Activated naive CD4-positive, alpha-beta T cell treated with anti-CD3 and anti-CD28 coated beads for 36 hours (primary cell): ENCODE measurements at regions of chr2 and their contacts with region 1.

Region 1: DNA sequence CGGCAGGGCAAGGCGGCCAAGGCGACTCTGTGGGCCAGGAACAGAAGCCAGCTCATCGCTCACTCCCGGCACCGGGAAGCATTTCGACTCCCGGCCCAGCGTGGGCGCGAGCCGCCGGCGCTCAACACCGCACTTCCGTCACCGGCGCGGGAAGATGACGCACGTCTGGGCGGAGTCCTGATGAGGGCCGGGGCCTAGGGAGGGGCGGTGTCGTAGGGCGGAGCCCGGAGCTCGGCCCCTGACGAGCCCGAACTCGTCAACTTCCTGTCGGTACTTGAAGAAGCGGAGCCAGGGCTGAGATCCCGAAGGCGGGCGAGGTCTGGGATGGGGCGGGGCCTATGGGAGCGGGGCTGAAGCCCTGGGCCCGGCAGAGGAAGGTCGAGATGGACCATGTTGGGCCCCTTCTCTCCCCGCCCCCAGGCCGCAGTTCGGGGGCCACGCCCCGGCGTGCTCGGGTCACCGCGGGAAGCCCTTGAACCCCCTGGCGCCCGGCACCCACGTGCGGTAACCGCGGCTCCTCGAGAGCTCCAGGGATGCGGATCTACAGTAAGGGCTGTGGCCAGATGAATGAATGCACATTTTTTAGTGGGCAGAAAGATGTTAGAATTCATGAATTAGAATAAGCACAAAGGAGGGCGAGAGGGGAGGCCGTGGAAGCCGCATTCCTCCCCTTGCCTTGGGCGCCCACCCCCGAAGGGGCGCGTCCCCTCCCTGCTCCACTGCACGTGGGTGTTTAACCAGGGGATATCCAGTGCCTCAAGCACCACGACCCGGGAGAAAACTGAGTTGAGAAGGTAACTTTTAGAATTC is at the start of gene RNASEH1:
- DNase-seq: peak; percentile 99
- H3K4me3 Mint-ChIP-seq: peak within 1 kb of the TSS; percentile 84
- H3K27ac Mint-ChIP-seq: peak within 1 kb of the TSS; percentile 90
- H3K4me1 Mint-ChIP-seq: peaks cover 36% of the 10 kb centered on the region
- H3K27me3 Mint-ChIP-seq: no peaks in the 10 kb centered on the region
- total RNA-seq, gene RNASEH1: 23.0 to 24.0 TPM

Region 2: DNA sequence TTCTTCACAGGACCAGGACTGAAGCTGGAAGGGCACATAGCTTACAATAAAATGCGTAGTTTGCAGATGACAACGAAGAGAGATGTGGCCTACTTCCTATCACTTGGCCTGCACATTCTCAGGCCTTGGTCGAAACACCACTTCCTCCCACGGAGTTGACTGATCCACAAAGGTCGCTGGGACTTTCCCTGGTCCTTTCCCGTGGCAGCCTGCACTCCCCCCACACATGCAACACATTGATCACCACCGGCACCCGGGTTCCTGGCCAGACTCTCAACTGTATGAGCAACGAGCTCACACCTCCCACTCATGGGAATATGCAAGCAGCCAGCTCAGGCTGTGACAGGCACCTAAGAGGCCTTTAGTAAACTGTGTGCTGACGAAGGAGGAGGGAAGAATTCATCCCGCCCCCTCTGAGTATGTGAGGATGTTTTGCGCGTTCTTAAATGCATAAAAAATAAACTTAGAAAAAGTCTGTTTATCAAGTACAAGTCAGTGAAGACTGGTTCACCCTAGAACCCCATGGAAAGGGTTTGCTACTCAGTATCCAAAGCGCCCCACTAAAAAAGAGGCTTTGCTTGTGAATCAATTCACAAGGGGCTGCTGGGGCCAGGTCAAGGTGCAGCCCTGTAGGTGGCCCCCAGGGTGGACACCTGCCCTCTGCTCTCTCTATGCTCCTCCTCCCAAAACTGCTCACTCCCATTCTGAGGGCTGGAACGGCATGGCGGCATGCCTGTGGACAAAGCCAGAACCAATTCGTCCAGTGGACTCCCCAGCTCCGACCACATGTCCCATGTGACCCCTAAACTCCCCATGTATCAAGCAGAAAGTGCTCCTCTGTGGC is 335.1 kb before region 1 on chr2:
- CTCF ChIA-PET with region 1: no interaction called
- intact Hi-C with region 1: loop called (anchors 1 kb)
- DNase-seq: peak; percentile 97
- H3K4me3 Mint-ChIP-seq: peak overlapping the region; percentile 35
- H3K27ac Mint-ChIP-seq: peak overlapping the region; percentile 100
- H3K4me1 Mint-ChIP-seq: peaks cover 44% of the 10 kb centered on the region
- H3K27me3 Mint-ChIP-seq: no peaks in the 10 kb centered on the region

Region 3: DNA sequence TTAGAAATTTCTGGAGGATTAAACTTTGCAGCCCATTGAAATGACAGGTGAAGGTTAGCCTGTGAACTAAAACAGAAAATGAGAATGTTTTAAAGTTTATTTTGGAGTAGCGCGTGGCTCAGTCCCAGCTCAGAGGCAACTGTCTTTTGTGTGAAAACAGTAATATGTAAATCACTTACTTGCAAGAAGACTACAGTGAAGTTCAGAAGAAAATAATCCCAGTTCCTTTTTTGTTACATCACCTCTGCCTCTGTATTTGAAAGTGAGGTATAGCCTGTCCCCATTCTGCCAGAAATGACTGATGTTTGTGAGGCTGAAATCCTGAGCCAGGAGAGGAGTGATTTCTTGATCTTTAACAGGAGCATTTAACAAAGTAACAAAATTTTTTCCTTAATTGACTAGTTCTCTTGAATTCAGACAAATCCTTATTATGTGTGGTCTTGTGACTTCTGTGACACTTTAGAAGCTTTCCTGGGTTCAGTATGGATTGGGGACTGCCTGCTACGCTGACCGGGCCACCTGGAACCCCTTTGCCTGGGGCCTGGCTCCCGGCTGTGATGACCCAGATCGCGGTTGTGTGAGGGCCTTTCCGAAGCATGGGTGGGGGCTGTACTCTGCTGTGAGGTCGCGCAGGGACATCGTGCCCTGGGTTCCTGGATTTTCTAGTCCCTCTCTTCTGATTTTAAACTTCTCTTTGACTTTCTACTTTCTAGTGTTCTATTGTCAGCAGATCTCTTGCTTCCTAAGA is 154.6 kb before region 1 on chr2:
- CTCF ChIA-PET with region 1: no interaction called
- intact Hi-C with region 1: no loop called
- DNase-seq: no peak
- H3K4me3 Mint-ChIP-seq: no peak overlapping the region
- H3K27ac Mint-ChIP-seq: no peak overlapping the region
- H3K4me1 Mint-ChIP-seq: peaks cover 13% of the 10 kb centered on the region
- H3K27me3 Mint-ChIP-seq: no peaks in the 10 kb centered on the region

Region 4: DNA sequence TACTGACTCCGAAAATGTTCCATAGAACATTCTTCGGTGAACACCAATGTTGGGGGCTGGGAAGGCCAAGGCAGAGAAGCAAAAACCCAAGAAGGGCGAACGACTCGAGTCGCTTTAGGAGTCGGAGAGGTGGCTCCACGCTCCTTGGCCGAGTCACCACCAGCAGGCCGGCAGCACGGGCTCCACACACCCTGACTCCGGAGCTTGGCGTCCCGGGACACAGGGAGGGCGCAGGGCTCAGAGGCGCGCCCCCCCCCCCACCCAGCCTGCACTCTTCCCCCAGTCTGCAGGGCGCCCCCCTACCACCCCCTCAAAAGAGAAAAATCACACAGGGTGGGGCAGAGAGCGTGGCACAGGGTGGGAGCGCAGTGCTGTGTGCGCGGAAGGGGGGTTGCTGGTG is 31.5 kb before region 1 on chr2:
- CTCF ChIA-PET with region 1: no interaction called
- intact Hi-C with region 1: no loop called
- DNase-seq: no peak
- H3K4me3 Mint-ChIP-seq: no peak overlapping the region
- H3K27ac Mint-ChIP-seq: no peak overlapping the region
- H3K4me1 Mint-ChIP-seq: peaks cover under 1% of the 10 kb centered on the region
- H3K27me3 Mint-ChIP-seq: no peaks in the 10 kb centered on the region

Region 5: GRCh38 chr2:3536682-3537632 is 21.5 kb before region 1 on chr2:
- CTCF ChIA-PET with region 1: no interaction called
- intact Hi-C with region 1: loop called (anchors 2 kb)
- DNase-seq: no peak
- H3K4me3 Mint-ChIP-seq: peak overlapping the region; percentile 61
- H3K27ac Mint-ChIP-seq: peak overlapping the region; percentile 83
- H3K4me1 Mint-ChIP-seq: peaks cover 3% of the 10 kb centered on the region
- H3K27me3 Mint-ChIP-seq: no peaks in the 10 kb centered on the region

Region 6: GRCh38 chr2:3595985-3596384 is 37.6 kb after region 1 on chr2:
- CTCF ChIA-PET with region 1: no interaction called
- intact Hi-C with region 1: loop called (anchors 2 kb)
- DNase-seq: peak; percentile 83
- H3K4me3 Mint-ChIP-seq: no peak overlapping the region
- H3K27ac Mint-ChIP-seq: peak overlapping the region; percentile 24
- H3K4me1 Mint-ChIP-seq: peaks cover 29% of the 10 kb centered on the region
- H3K27me3 Mint-ChIP-seq: peaks cover 9% of the 10 kb centered on the region

Region 7: DNA sequence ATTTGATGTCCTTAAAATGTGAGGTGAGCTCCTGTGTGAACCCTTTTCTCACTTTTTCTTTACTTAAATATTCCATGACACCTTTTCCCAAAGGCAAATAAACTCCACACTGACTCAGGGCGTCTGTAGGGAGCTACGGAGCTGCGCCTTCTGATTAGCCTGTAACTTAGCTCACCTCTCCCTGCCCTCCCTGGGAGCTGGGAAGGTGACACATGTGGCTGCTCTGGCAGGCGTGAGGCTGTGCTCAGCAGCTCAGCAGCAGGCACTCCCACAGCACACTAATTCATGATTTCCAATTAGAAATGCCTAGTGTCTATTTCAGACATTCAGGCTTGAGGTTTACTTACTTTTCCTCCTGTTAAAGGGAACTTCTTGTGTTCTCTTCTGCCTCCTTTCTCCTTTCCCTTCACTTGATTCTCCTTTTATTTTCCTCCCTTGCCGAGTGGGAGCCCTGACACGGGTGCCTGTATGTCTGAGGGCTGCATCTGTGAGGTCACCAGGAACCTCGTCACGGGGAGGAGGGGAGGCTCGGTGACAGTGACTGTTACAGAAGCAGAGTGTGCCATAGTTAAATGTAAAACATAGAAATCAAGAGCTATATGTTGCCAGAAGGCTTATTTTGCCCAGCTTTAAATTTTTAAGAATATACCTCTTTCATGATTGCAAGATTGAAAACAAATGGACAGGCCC is 582.0 kb after region 1 on chr2:
- CTCF ChIA-PET with region 1: no interaction called
- intact Hi-C with region 1: no loop called
- DNase-seq: no peak
- H3K4me3 Mint-ChIP-seq: no peak overlapping the region
- H3K27ac Mint-ChIP-seq: no peak overlapping the region
- H3K4me1 Mint-ChIP-seq: no peaks in the 10 kb centered on the region
- H3K27me3 Mint-ChIP-seq: no peaks in the 10 kb centered on the region

Region 8: DNA sequence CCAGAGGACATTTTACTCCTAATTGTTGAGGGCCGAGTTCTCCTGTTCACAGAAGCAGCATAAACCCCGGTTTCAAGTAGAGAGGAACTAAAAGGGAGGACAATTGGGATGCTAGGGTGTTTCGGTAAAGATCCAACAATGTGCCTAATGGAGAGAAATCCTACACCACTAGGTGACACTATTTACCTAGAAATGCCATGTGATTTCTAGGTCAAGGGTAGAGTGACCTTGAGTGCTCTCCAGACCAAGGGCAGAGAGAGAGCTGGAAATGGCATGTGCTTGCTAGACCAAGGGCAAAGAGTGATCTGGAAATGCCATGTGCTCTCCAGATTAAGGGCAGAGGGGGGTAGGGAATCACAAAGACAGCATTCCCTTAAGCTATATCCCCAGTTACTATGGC is 616.9 kb after region 1 on chr2:
- CTCF ChIA-PET with region 1: no interaction called
- intact Hi-C with region 1: no loop called
- DNase-seq: no peak
- H3K4me3 Mint-ChIP-seq: no peak overlapping the region
- H3K27ac Mint-ChIP-seq: no peak overlapping the region
- H3K4me1 Mint-ChIP-seq: no peaks in the 10 kb centered on the region
- H3K27me3 Mint-ChIP-seq: no peaks in the 10 kb centered on the region